ENCODE measurements at regions of chr21 and their contacts with region 1.

Region 1: GRCh38 chr21:31107871-31108270 is 69.6 kb upstream of the KRTAP19-8 start:
- DNase-seq: no peak
- H3K4me3 ChIP-seq: no peak overlapping the region
- H3K27ac ChIP-seq: no peak overlapping the region
- H3K4me1 ChIP-seq: no peaks in the 10 kb centered on the region
- H3K27me3 ChIP-seq: no peaks in the 10 kb centered on the region
- CTCF ChIP-seq: no peak
- POLR2A ChIP-seq: no peak

Region 2: DNA sequence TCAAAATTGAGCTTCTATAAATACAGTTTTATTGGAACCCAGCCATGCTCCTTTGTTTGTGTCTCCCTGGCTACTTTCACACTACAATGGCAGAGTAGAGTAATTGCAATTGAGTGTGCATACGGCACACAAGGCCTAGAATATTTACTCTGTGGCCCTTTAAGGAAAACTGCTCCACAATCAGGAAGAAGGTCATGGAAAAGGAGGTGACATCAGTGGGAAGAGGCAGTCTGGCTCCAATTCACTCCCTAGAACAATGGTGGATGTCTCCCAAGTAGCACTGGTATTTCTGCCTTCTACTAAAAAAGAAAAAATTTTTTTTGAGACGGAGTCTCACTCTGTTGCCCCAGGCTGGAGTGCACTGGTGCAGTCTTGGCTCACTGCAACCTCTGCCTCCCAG is 120.9 kb before region 1 on chr21:
- intact Hi-C with region 1: no loop called
- DNase-seq: no peak
- H3K4me3 ChIP-seq: no peak overlapping the region
- H3K27ac ChIP-seq: no peak overlapping the region
- H3K4me1 ChIP-seq: no peaks in the 10 kb centered on the region
- H3K27me3 ChIP-seq: no peaks in the 10 kb centered on the region
- CTCF ChIP-seq: no peak
- POLR2A ChIP-seq: no peak

Region 3: GRCh38 chr21:31012133-31013089 is 95.5 kb before region 1 on chr21:
- intact Hi-C with region 1: no loop called
- DNase-seq: no peak
- H3K4me3 ChIP-seq: no peak overlapping the region
- H3K27ac ChIP-seq: no peak overlapping the region
- H3K4me1 ChIP-seq: no peaks in the 10 kb centered on the region
- H3K27me3 ChIP-seq: no peaks in the 10 kb centered on the region
- CTCF ChIP-seq: no peak
- POLR2A ChIP-seq: no peak

Region 4: GRCh38 chr21:31043471-31043870 is 64.4 kb before region 1 on chr21:
- intact Hi-C with region 1: no loop called
- DNase-seq: no peak
- H3K4me3 ChIP-seq: no peak overlapping the region
- H3K27ac ChIP-seq: no peak overlapping the region
- H3K4me1 ChIP-seq: no peaks in the 10 kb centered on the region
- H3K27me3 ChIP-seq: no peaks in the 10 kb centered on the region
- CTCF ChIP-seq: no peak
- POLR2A ChIP-seq: no peak

Region 5: DNA sequence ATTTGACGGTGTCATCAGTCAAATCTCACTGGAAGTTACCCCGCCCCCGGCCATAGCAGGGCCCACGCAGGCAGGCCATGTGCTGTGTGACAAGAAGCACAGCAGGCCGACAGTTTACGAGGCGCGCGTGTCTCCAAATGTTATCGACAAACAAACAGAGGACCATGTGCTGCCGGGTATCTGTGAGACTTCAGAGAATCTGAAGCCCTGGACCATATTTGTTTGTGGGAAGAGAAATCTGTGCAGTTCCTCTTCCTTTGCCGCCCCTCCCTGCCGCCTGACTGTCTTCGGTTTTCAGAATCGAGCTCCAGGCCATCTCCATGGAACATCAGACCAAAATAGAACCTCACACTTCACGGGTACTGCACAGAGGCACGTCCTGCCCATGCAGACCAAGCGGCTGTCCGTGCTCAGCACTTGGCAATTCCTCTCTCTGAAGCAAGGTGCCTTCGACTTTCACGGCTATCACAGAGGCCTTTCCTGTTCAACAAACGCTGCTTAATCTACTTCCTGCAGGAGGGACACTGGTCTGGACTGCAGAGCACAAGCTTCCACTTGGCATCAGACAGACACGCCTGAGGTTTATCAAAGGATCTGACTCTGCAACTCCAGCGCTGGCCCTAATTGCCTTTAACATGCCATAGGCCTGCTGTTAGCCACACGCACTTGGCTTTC is 66.1 kb after region 1 on chr21:
- intact Hi-C with region 1: loop called (anchors 10 kb)
- DNase-seq: no peak
- H3K4me3 ChIP-seq: no peak overlapping the region
- H3K27ac ChIP-seq: peak overlapping the region in 1 of 3 donors; percentile 23
- H3K4me1 ChIP-seq: no peaks in the 10 kb centered on the region
- H3K27me3 ChIP-seq: no peaks in the 10 kb centered on the region
- CTCF ChIP-seq: no peak
- POLR2A ChIP-seq: no peak

Region 6: GRCh38 chr21:31604591-31605190 is 496.8 kb after region 1 on chr21:
- intact Hi-C with region 1: loop called (anchors 10 kb)
- DNase-seq: peak; percentile 47 to 57
- H3K4me3 ChIP-seq: no peak overlapping the region
- H3K27ac ChIP-seq: no peak overlapping the region
- H3K4me1 ChIP-seq: no peaks in the 10 kb centered on the region
- H3K27me3 ChIP-seq: no peaks in the 10 kb centered on the region
- CTCF ChIP-seq: peak; percentile 51 to 83 (median 74)
- POLR2A ChIP-seq: no peak